Activated CD8-positive, alpha-beta T cell treated with anti-CD3 and anti-CD28 coated beads, Interleukin-2, amount 10 ng/mL, durations not matched to agents 7 days and 5 days (primary cell): ENCODE measurements at regions of chr2 and their contacts with region 1.

Region 1: DNA sequence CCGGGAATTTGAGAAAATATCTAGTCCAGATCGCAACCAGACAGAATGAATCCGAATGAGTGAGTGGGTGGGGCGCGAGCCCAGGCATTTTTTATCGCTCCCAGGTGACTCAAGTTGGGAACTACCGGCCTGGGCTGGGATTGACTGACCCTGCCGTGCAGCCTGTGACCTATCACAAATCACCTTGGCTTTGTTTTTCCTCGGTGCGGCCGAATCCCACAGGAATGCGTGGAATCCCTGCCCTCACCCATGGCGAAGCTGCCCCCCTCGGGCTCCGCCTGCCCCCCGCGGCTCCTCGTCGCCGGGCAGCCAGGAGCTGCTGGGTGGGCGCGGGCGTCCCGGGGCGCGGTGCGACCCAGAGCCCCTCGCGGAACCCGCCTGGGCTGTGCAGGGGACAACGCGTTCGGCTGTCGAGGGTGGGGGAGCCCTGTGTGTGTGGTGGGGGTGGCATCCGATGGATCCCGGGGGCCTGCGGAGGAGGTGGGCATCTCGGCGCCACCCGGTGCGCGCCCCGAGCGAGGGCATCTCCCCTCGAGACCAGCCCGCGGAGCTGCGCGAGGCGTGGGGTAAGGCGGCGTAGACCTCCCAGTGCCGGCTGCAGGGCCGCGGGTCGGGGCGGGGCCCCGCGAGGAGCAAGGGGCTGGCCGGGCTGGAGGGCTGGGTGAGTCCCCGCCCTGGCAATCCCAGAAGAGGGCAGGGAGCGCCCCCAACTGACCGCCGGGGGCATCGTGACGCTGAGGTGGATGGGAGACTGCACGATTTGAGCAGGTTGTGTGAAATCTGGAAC is 16.5 kb downstream of the B3GNT7 start:
- DNase-seq: peak; percentile 80
- ATAC-seq: peak; percentile 99
- H3K4me3 Mint-ChIP-seq: peak overlapping the region; percentile 54
- H3K27ac Mint-ChIP-seq: no peak overlapping the region
- H3K4me1 Mint-ChIP-seq: peaks cover 6% of the 10 kb centered on the region
- H3K27me3 Mint-ChIP-seq: peaks cover 38% of the 10 kb centered on the region

Region 2: DNA sequence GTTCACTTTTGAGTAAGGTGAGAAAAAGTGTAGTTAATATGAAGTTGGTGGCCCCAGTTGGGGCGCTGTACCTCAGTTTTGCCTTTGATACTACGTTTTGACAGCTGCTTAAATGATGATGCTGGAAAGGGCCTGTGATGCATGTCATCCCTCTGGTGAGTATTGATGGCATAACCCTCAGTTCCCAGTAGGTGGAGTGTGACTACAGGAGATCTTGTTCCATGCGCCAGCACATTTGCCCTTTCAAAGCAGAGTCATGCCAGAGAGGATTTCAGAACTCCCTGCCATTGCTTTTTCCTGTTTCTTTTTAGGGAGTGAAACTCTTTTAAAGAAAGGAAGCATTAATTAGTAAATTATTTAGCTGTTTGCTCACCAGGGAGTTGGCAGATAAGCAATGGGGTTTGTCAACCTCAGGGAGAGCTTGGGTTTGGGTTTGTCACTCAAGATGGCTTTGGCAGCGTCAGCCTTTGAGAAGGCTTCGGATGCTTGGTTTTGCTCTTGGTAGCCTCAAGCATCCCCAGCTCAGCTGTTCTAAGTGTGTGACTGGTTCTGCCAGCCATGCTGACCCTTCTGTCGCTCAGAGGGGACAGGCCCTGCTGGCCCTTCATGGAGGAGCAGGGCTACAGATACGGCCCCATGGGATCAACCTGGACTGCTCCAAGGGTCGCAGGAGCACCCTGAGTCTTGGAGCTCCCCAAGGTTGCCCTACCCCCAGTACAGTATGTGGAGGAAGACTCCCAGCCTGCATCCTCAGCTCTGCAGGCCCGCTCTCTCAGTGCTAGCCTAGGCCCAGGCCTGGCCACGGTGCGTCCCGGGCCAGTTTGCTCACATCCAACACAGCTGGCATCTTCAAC is 184.5 kb before region 1 on chr2:
- CTCF ChIA-PET with region 1: interaction called, 18 read pairs
- POLR2A ChIA-PET with region 1: no interaction called
- DNase-seq: peak; percentile 68
- ATAC-seq: peak; percentile 93
- H3K4me3 Mint-ChIP-seq: no peak overlapping the region
- H3K27ac Mint-ChIP-seq: no peak overlapping the region
- H3K4me1 Mint-ChIP-seq: no peaks in the 10 kb centered on the region
- H3K27me3 Mint-ChIP-seq: no peaks in the 10 kb centered on the region

Region 3: DNA sequence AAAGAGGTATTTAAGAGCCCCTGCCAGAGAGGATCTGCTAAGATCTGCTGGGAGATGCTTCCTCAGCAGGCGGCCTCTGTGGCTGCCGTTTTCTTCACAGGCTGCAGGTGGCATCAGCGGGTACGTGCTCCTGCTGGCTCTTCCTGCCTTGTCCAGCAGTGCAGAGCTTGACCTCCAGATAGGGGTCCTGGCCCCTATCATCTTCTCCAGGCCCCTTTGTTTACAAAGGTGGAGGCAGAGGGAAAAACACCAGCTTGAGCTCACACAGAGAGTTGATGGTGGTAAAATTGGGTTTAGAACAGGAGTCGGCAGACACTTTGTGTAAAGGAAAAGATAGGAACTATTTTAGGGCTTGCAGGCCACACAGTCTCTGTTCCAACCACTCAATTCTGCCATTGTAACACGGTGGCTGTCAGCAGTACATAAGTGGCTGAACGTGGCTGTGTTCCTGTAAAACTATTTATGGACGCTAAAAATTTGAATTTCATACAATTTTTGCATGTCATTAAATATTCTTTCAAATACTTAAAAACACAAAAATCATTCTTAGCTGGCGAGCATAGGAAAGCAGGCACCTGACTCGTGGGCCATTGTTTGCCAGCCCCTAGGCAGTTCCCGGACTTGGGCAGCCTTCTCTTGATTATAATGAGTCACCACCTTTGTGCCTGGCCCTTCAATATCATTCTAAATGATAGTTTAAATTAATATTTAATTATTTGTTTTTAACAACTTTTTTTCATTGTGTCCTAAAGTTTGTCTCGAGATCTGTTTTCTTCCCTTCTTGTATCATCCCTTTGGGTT is 114.7 kb before region 1 on chr2:
- CTCF ChIA-PET with region 1: interaction called, 20 read pairs
- POLR2A ChIA-PET with region 1: no interaction called
- DNase-seq: peak; percentile 45
- ATAC-seq: peak; percentile 71
- H3K4me3 Mint-ChIP-seq: no peak overlapping the region
- H3K27ac Mint-ChIP-seq: no peak overlapping the region
- H3K4me1 Mint-ChIP-seq: peaks cover 4% of the 10 kb centered on the region
- H3K27me3 Mint-ChIP-seq: peaks cover 4% of the 10 kb centered on the region

Region 4: DNA sequence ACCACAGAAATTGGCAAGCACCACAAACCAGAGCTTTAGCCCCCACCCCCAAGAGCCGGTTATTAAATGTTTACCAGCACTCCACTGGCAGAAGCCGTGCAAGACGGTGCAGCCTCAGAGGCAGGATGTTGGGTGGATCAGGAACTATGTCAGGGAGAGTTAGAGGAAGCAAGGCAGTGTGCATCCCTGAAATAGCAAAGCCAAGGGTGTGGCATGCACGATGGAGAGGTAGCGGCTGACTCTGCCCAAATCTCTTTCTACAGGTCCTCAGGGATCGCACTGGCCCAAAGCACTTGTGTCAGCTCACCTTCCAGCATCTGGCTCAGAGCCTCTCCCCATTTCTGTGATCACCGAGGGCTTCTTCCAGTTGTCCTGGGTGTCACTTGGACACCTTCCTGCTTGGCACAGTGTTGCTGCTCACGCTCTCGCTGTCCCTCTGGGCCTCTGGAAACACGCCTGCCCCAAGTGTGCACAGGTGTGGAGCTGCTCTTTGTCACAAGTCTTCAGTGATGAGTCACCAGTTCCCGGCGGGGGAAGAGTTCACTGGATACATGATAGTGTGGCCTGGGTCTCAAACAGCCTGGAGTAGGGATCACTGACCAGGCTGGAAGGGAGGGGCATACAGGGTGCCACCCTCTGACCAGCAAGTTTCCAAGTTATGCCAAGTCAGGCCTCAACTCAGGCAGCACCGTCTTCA is 33.9 kb before region 1 on chr2:
- CTCF ChIA-PET with region 1: no interaction called
- POLR2A ChIA-PET with region 1: no interaction called
- DNase-seq: no peak
- ATAC-seq: no peak
- H3K4me3 Mint-ChIP-seq: no peak overlapping the region
- H3K27ac Mint-ChIP-seq: no peak overlapping the region
- H3K4me1 Mint-ChIP-seq: no peaks in the 10 kb centered on the region
- H3K27me3 Mint-ChIP-seq: no peaks in the 10 kb centered on the region

Region 5: DNA sequence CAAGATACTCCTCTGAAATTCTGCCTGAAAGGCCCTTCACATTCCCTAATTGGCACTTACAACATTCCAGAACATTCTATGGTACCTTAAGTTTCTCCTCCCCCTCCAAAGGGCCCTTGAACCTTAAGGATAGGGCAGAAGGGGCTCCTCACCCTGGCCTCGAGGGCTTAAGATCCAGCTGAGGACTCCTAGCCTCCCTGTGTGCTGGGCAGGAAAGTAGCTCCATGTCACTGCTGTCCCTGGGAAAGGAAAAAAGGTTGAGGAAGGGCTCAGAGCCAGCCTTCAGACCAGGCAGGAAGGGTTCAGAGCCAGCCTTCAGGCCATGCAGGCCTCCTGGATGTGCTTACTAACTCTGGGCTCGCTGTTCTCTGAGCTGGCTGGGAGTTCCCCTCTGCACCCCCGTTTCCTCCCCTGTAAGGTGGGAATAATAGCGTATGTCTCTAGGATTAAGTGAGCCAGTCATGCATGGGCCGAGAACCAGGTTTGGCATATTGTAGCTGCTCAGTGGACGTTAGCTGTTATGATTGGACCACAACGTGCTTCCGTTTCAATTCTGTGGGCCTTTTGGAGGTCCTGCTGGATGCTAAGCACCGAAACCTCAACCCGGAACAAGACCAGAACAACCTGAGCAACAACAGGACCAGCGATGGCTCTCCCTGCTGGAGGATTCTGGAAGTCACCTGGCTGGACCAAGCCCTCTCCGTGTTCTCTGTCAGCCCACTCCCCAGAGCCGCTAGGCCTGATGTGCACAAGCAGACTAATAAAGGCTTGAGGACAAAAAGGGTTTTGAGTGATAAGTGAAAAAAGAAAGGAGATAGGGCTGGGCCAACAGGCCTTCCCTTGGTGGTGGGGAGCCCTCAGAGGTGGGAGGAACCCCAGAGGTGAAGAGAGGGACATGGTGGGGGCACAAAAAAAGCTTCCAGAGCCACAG is 17.5 kb before region 1 on chr2:
- CTCF ChIA-PET with region 1: interaction called, 26 read pairs
- POLR2A ChIA-PET with region 1: interaction called, 4 read pairs
- DNase-seq: no peak
- ATAC-seq: no peak
- H3K4me3 Mint-ChIP-seq: peak overlapping the region; percentile 48
- H3K27ac Mint-ChIP-seq: peak overlapping the region; percentile 95
- H3K4me1 Mint-ChIP-seq: peaks cover 38% of the 10 kb centered on the region
- H3K27me3 Mint-ChIP-seq: peaks cover 16% of the 10 kb centered on the region

Region 6: GRCh38 chr2:231436957-231437356 is 24.9 kb after region 1 on chr2:
- CTCF ChIA-PET with region 1: no interaction called
- POLR2A ChIA-PET with region 1: no interaction called
- DNase-seq: no peak
- ATAC-seq: no peak
- H3K4me3 Mint-ChIP-seq: no peak overlapping the region
- H3K27ac Mint-ChIP-seq: no peak overlapping the region
- H3K4me1 Mint-ChIP-seq: peaks cover 5% of the 10 kb centered on the region
- H3K27me3 Mint-ChIP-seq: no peaks in the 10 kb centered on the region

Region 7: DNA sequence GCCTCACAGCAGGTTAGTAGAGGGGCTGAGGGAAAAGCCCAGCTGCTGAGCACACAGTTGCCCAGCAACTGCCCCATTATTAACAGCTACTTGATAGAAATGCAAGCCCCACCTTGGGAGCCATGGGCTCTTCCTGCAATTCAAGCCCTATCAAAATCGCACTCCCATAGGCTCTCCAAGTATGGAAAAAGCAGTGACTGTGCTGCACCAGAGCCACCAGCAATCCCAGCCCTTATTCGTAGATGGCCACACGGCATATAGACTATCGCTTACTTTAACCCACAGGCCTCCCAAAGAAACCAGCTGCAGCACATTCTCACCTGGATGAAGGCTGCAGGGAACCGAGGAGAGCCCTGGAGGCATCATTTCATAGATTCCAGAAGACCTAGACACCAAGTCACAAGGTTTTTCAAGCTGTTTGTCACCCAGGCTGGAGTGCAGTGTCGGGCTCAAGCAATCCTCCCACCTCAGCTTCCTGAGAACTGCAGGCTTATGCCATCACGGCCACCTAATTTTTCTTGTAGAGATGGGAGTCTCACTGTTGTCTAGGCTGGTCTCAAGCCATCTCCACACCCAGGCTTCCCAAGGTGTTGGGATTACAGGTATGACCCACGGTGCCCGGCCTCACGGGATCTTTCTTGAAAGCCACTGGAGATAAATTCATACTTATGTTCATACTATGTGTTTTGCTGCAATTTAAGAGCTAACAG is 40.9 kb after region 1 on chr2:
- CTCF ChIA-PET with region 1: interaction called, 28 read pairs
- POLR2A ChIA-PET with region 1: interaction called, 3 read pairs
- DNase-seq: no peak
- ATAC-seq: no peak
- H3K4me3 Mint-ChIP-seq: no peak overlapping the region
- H3K27ac Mint-ChIP-seq: peak overlapping the region; percentile 39
- H3K4me1 Mint-ChIP-seq: peaks cover 16% of the 10 kb centered on the region
- H3K27me3 Mint-ChIP-seq: no peaks in the 10 kb centered on the region